Activated CD8-positive, alpha-beta memory T cell treated with anti-CD3 and anti-CD28 coated beads, Interleukin-2, amount 10 ng/mL, durations not matched to agents 7 days and 5 days (primary cell): ENCODE measurements at regions of chr1 and their contacts with region 1.

Region 1: GRCh38 chr1:166884040-166884642 is 8.1 kb upstream of the TADA1 start:
- DNase-seq: peak; percentile 64
- ATAC-seq: peak; percentile 85
- H3K4me3 Mint-ChIP-seq: peak overlapping the region; percentile 35
- H3K27ac Mint-ChIP-seq: no peak overlapping the region
- H3K4me1 Mint-ChIP-seq: peaks cover 20% of the 10 kb centered on the region
- H3K27me3 Mint-ChIP-seq: peaks cover 40% of the 10 kb centered on the region

Region 2: GRCh38 chr1:166902271-166902670 is 18.1 kb after region 1 on chr1:
- CTCF ChIA-PET with region 1: interaction called, 49 read pairs
- DNase-seq: no peak
- ATAC-seq: no peak
- H3K4me3 Mint-ChIP-seq: no peak overlapping the region
- H3K27ac Mint-ChIP-seq: no peak overlapping the region
- H3K4me1 Mint-ChIP-seq: peaks cover 46% of the 10 kb centered on the region
- H3K27me3 Mint-ChIP-seq: peaks cover 13% of the 10 kb centered on the region